Motor neuron (in vitro differentiated cells): ENCODE measurements at regions of chr2 and their contacts with region 1.

Region 1: GRCh38 chr2:177332041-177332991 is 60.3 kb upstream of the AGPS start:
- ATAC-seq: peak; percentile 77 to 90 (median 86)
- H3K4me3 ChIP-seq: no peak overlapping the region
- H3K27ac ChIP-seq: peak overlapping the region in 1 of 2 donors; percentile 12
- H3K4me1 ChIP-seq: peaks cover 0 to 7% of the 10 kb centered on the region in 2 donors

Region 2: GRCh38 chr2:177164584-177165052 is 167.7 kb before region 1 on chr2:
- in situ Hi-C with region 1: loop called in 8 of 9 experiments (anchors 10 to 25 kb)
- ATAC-seq: peak; percentile 66 to 93 (median 90)
- H3K4me3 ChIP-seq: peak overlapping the region; percentile 18 to 31 (median 25)
- H3K27ac ChIP-seq: peak overlapping the region; percentile 77 to 91
- H3K4me1 ChIP-seq: peaks cover 24 to 47% of the 10 kb centered on the region in 2 donors

Region 3: GRCh38 chr2:177419274-177419673 is 87.0 kb after region 1 on chr2:
- in situ Hi-C with region 1: loop called in 1 of 9 experiments (anchors 10 kb)
- ATAC-seq: peak in 3 of 8 experiments; percentile 24 to 65 (median 49)
- H3K4me3 ChIP-seq: no peak overlapping the region
- H3K27ac ChIP-seq: no peak overlapping the region
- H3K4me1 ChIP-seq: peaks cover 0 to 11% of the 10 kb centered on the region in 2 donors

Region 4: DNA sequence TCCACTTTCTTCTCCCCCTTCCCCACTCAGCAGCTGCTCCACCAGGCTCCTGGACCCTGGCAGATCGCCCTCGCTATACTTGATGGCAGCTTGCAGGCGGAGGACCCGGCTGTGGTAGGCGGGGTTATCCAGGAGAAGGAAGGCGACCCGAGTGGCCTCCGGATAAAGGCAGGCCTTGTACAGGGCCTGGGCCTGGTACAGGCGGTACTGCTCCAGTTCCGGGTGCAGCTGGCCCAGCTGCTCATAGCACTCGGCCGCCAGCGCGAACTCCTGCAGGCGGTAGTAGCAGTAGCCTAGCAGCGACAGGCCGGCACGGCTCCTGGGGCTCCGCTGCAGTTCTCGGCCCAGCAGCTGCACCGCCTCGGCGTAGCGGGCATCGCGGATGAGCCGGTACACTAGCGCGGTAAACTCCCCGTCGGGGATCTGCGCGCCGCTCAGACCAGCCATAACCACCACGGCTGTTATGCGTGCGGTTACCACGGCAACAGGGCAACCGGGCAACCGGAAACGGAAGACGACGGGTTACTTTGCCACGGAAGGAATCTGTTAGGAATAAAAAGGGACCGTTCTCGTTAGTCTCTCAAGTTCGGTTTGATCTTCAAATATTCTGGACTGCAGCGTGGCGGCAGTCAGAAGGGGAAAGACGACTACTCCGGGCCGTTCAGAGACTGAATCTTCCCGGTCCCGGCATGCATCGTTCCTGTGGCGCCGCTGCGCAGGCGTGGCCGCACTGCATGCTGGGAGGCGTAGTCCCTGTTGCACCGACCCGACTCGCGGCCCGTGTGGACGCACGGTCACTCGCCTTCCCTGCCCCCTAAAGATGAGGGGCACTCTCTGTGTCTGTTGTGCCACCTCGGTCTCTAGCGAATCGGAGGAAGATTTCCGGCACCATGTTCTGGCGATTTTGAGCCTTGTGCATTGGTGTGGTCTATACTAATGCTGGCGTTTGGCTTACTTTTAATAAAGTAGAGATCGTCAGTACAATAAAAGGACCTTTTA is 286.2 kb after region 1 on chr2:
- in situ Hi-C with region 1: loop called in 2 of 9 experiments (anchors 25 kb)
- ATAC-seq: peak; percentile 90 to 97 (median 93)
- H3K4me3 ChIP-seq: peak overlapping the region; percentile 68 to 82 (median 80)
- H3K27ac ChIP-seq: peak overlapping the region; percentile 99 to 100
- H3K4me1 ChIP-seq: peaks cover 22 to 61% of the 10 kb centered on the region in 2 donors

Region 5: GRCh38 chr2:177724398-177725287 is 392.3 kb after region 1 on chr2:
- in situ Hi-C with region 1: loop called in 1 of 9 experiments (anchors 25 kb)
- ATAC-seq: peak; percentile 51 to 82 (median 64)
- H3K4me3 ChIP-seq: no peak overlapping the region
- H3K27ac ChIP-seq: peak overlapping the region in 1 of 2 donors; percentile 65
- H3K4me1 ChIP-seq: peaks cover 38 to 97% of the 10 kb centered on the region in 2 donors

Region 6: GRCh38 chr2:177763532-177764265 is 431.4 kb after region 1 on chr2:
- in situ Hi-C with region 1: loop called in 6 of 9 experiments (anchors 25 kb)
- ATAC-seq: peak; percentile 86 to 98 (median 90)
- H3K4me3 ChIP-seq: no peak overlapping the region
- H3K27ac ChIP-seq: no peak overlapping the region
- H3K4me1 ChIP-seq: peaks cover 5 to 17% of the 10 kb centered on the region in 2 donors